ENCODE measurements at regions of chr13 and their contacts with region 1.

Region 1: GRCh38 chr13:60627071-60627686 is 230.2 kb downstream of the TDRD3 start:
- DNase-seq: peak; percentile 3
- ATAC-seq: no peak; the same call in 1 of the 2 replicates
- H3K4me3 ChIP-seq: no peak overlapping the region
- H3K27ac ChIP-seq: no peak overlapping the region
- H3K4me1 ChIP-seq: no peaks in the 10 kb centered on the region
- H3K27me3 ChIP-seq: no peaks in the 10 kb centered on the region
- CTCF ChIP-seq: peak; percentile 50
- POLR2A ChIP-seq: no peak
- RAD21 ChIP-seq: peak; percentile 61

Region 2: GRCh38 chr13:60679928-60680694 is 52.9 kb after region 1 on chr13:
- CTCF ChIA-PET with region 1: no interaction called
- POLR2A ChIA-PET with region 1: no interaction called
- dilution Hi-C with region 1: no loop called
- in situ Hi-C with region 1: no loop called
- intact Hi-C with region 1: no loop called
- DNase-seq: no peak
- ATAC-seq: no peak
- H3K4me3 ChIP-seq: no peak overlapping the region
- H3K27ac ChIP-seq: no peak overlapping the region
- H3K4me1 ChIP-seq: no peaks in the 10 kb centered on the region
- H3K27me3 ChIP-seq: no peaks in the 10 kb centered on the region
- CTCF ChIP-seq: no peak
- POLR2A ChIP-seq: no peak
- RAD21 ChIP-seq: no peak

Region 3: DNA sequence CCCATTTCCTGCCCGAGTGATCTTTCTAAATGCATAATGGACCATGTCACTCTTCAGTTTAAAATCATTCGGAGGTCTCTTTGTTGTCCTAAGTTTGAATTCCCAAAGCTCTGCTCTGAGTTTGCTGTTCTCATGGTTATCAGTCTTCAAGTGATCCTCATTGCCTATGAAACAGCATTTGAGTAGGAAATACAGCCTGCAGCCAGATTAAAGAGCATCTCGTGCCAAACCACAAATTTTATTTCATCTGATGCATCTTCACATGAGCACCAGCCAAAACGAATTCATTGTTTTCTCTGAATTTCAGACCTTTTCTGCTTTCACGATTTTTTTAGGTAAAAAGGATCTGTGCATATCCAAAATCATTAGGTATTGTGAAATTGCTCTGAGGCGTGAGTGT is 69.4 kb after region 1 on chr13:
- CTCF ChIA-PET with region 1: no interaction called
- POLR2A ChIA-PET with region 1: no interaction called
- dilution Hi-C with region 1: no loop called
- in situ Hi-C with region 1: loop called (anchors 10 kb)
- intact Hi-C with region 1: no loop called
- DNase-seq: no peak
- ATAC-seq: no peak
- H3K4me3 ChIP-seq: no peak overlapping the region
- H3K27ac ChIP-seq: no peak overlapping the region
- H3K4me1 ChIP-seq: no peaks in the 10 kb centered on the region
- H3K27me3 ChIP-seq: no peaks in the 10 kb centered on the region
- CTCF ChIP-seq: no peak
- POLR2A ChIP-seq: no peak
- RAD21 ChIP-seq: no peak

Region 4: DNA sequence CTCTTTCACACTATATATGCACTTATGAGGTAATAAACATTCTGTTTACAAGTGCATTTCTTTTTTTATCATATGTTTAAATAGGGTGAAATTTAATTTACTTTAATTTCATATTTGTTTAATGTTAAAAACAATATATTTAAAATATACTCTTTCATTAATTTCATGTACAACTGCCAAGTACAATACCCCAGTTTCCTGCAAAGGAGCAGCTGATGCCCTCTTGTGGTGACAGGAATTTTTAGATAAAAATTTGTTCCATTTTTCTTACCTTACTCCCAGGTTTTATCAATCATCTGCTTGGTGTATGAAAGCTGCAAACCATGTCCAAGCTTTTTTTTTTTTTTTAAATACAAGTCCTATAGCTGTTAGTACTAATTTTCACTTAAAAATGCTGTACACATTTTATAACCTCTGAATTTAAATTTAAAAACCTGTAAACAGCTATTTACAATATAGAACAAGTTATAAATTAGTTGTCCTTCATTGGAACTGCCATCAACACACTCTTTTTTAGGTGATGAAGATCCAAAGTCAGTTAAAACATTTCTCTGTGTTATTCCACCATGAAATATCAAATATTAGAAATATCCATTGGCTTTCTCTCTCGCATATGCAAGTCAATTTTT is 783.6 kb after region 1 on chr13:
- CTCF ChIA-PET with region 1: no interaction called
- POLR2A ChIA-PET with region 1: no interaction called
- dilution Hi-C with region 1: no loop called
- in situ Hi-C with region 1: loop called (anchors 10 kb)
- intact Hi-C with region 1: loop called (anchors 2 kb)
- DNase-seq: peak; percentile 8
- ATAC-seq: no peak
- H3K4me3 ChIP-seq: no peak overlapping the region
- H3K27ac ChIP-seq: no peak overlapping the region
- H3K4me1 ChIP-seq: no peaks in the 10 kb centered on the region
- H3K27me3 ChIP-seq: peaks cover 6% of the 10 kb centered on the region; the same call in 1 of the 2 replicates
- CTCF ChIP-seq: peak; percentile 50
- POLR2A ChIP-seq: no peak
- RAD21 ChIP-seq: peak; percentile 31; the same call in 1 of the 2 replicates

Region 5: DNA sequence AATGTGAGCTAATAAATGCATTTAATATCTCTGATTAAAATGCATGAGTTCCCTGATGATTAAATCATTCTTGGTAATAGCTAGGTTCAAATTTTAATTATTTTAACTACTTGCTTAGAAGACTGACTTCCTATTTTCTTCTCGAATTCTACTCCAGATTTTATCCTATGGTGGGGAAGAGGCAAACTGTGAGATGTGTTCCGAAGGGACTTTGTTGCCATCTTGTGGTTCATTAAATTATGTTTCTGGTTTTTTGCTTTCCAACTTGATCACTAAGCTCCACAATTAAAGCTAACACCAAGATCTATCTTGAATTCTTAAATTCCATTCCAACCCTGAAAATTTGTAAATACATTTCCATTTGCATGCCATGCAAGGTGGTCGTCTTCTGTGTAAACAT is 1326.9 kb after region 1 on chr13:
- CTCF ChIA-PET with region 1: no interaction called
- POLR2A ChIA-PET with region 1: no interaction called
- dilution Hi-C with region 1: no loop called
- in situ Hi-C with region 1: no loop called
- intact Hi-C with region 1: loop called (anchors 10 kb)
- DNase-seq: peak; percentile 0
- ATAC-seq: no peak
- H3K4me3 ChIP-seq: no peak overlapping the region
- H3K27ac ChIP-seq: no peak overlapping the region
- H3K4me1 ChIP-seq: no peaks in the 10 kb centered on the region
- H3K27me3 ChIP-seq: no peaks in the 10 kb centered on the region
- CTCF ChIP-seq: no peak; the same call in 1 of the 2 replicates
- POLR2A ChIP-seq: no peak
- RAD21 ChIP-seq: no peak

Region 6: DNA sequence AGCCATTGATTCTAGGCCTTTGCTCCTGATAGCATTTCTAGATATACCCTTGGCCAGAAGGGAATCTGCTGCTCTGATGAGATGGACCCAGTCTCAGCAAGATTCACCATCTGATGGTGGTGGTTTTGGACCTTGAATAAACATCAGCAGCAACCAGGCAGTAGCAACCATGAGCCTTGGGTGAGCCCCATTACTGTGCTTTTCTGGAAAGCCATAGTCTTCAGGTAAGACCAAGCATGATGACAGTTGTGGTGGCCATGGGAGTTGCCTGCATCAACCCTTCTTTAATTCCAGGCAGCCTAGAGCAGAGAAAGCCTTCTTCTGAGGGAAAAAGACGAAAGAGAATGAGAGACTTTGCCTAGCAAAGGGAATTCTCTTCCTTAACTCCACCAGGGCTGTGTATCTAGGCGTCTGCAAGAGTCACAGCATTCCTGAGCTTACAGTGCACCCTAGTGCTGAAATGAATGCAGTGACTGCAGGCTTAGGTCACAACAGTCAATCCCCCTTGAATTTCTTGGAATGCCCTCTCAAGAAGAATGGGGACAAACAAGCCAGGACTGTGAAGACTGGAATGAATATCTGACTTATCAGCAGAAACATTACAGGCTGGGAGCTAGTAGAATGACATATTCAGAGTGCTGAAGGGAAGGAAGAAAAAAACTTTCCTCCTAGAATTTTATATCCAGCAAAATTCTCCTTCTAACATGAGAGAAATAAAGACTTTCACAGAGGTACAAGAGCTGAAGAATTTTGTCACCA is 1730.9 kb after region 1 on chr13:
- CTCF ChIA-PET with region 1: no interaction called
- POLR2A ChIA-PET with region 1: no interaction called
- dilution Hi-C with region 1: no loop called
- in situ Hi-C with region 1: no loop called
- intact Hi-C with region 1: loop called (anchors 5 kb)
- DNase-seq: peak; percentile 71
- ATAC-seq: peak; percentile 97
- H3K4me3 ChIP-seq: no peak overlapping the region
- H3K27ac ChIP-seq: no peak overlapping the region
- H3K4me1 ChIP-seq: peaks cover 3% of the 10 kb centered on the region; the same call in 1 of the 2 replicates
- H3K27me3 ChIP-seq: no peaks in the 10 kb centered on the region
- CTCF ChIP-seq: peak; percentile 69
- POLR2A ChIP-seq: no peak
- RAD21 ChIP-seq: peak; percentile 87

Measured in IMR-90 (cell line).